Breast epithelium (tissue), 4 donors: ENCODE measurements at regions of chrX and their contacts with region 1.

Region 1: GRCh38 chrX:120839491-120839890 is 36.2 kb downstream of the CT47B1 start:
- DNase-seq: no peak
- H3K4me3 ChIP-seq: no peak overlapping the region
- H3K27ac ChIP-seq: no peak overlapping the region
- H3K4me1 ChIP-seq: no peaks in the 10 kb centered on the region
- H3K27me3 ChIP-seq: no peaks in the 10 kb centered on the region
- CTCF ChIP-seq: no peak
- POLR2A ChIP-seq: no peak

Region 2: DNA sequence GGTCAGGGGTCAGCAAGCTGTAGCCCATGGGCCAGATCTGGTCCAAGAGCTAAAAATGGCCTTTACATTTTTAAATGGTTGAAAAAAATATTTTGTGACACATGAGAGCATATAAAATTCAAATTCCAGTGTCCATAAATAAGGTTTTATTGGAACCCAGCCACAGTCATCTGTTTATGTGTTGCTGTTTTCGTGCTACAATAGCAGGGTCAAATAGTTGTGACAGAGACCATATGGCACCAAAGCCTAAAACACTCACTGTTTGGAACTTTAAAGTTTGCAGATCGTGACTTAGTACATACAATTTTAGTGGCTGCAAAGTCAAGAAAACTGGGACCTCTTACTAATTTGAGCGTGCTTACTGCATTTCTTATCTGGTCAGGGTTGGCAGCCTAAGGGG is 399.6 kb before region 1 on chrX:
- intact Hi-C with region 1: no loop called
- DNase-seq: no peak
- H3K4me3 ChIP-seq: no peak overlapping the region
- H3K27ac ChIP-seq: no peak overlapping the region
- H3K4me1 ChIP-seq: no peaks in the 10 kb centered on the region
- H3K27me3 ChIP-seq: no peaks in the 10 kb centered on the region
- CTCF ChIP-seq: no peak
- POLR2A ChIP-seq: no peak

Region 3: DNA sequence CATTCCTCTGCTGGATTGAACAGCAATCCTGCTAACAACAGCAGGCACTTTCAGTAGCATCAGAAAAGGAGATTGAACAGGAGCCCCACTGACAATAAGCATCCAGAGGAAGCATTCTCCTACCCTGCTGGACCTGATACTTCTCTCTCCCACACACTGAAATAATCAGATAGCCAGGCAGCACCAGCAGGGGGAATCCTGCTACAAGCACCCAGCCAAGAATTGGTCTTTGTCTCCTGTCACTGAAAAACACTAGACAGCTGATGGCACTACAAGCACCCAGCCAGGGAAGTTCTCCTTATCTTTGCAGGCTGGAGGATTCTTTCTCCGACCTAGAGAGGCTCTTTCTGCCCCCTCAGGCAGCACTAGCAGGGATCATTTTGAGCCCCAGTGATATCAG is 1900.3 kb after region 1 on chrX:
- intact Hi-C with region 1: loop called (anchors 5 kb)
- DNase-seq: no peak
- H3K4me3 ChIP-seq: no peak overlapping the region
- H3K27ac ChIP-seq: no peak overlapping the region
- H3K4me1 ChIP-seq: no peaks in the 10 kb centered on the region
- H3K27me3 ChIP-seq: no peaks in the 10 kb centered on the region
- CTCF ChIP-seq: no peak
- POLR2A ChIP-seq: no peak